CD4-positive, alpha-beta T cell (primary cell): ENCODE measurements at regions of chr7 and their contacts with region 1.

Region 1: GRCh38 chr7:156949541-156950380 is at the start of gene NOM1:
- DNase-seq: peak; percentile 85 to 96 (median 90)
- ATAC-seq: peak; percentile 94
- H3K4me3 ChIP-seq: peak within 1 kb of the TSS; percentile 89
- H3K4me3 Mint-ChIP-seq: peak within 1 kb of the TSS; percentile 97
- H3K27ac ChIP-seq: peak within 1 kb of the TSS in 1 of 2 donors; percentile 50
- H3K27ac Mint-ChIP-seq: peak within 1 kb of the TSS; percentile 82
- H3K4me1 ChIP-seq: peaks cover 30% of the 10 kb centered on the region
- H3K4me1 Mint-ChIP-seq: peaks cover 34% of the 10 kb centered on the region
- H3K27me3 ChIP-seq: peaks cover 0 to 4% of the 10 kb centered on the region in 2 experiments
- H3K27me3 Mint-ChIP-seq: peaks cover 8% of the 10 kb centered on the region
- CTCF ChIP-seq: peak; percentile 50
- total RNA-seq, gene NOM1: 25.5 to 27.6 TPM

Region 2: GRCh38 chr7:156927571-156928405 is 22.0 kb before region 1 on chr7:
- CTCF ChIA-PET with region 1: interaction called, 19 read pairs
- POLR2A ChIA-PET with region 1: no interaction called
- intact Hi-C with region 1: no loop called
- DNase-seq: no peak
- ATAC-seq: no peak
- H3K4me3 ChIP-seq: no peak overlapping the region
- H3K4me3 Mint-ChIP-seq: no peak overlapping the region
- H3K27ac ChIP-seq: no peak overlapping the region
- H3K27ac Mint-ChIP-seq: no peak overlapping the region
- H3K4me1 ChIP-seq: peaks cover 21% of the 10 kb centered on the region
- H3K4me1 Mint-ChIP-seq: peaks cover 23% of the 10 kb centered on the region
- H3K27me3 ChIP-seq: no peaks in the 10 kb centered on the region
- H3K27me3 Mint-ChIP-seq: no peaks in the 10 kb centered on the region
- CTCF ChIP-seq: no peak

Region 3: DNA sequence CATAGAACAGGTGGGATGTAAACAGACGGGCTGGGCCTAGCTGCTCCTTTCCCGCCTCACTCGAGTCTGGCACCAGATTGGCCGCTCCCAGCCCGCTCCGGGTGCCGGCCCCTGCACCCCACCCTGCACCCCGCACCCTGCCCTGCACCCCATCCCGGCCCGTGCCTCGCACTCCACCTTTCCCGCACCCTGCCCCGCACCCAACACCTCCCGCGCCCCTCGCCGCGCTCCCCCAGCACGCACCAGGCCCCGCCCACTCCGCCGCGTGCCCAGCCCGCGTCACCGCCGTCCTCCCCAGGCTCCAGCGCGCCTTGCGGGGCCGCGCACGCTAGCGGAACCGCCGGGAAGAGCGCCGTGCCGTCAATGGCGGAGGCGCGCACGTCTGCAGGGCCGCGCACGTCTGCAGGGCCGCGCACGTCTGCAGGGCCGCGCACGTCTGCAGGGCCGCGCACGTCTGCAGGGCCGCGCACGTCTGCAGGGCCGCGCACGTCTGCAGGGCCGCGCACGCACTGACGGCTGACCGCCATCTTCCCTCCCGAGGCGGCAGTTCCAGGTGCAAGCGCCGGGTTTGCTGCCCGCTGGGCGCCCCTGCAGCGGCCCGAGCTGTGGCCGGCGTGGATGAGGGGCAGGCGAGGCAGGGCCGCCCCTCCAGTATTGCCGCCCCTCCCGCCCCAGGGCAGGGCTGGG is 188.8 kb after region 1 on chr7 and contains the start of gene UBE3C:
- CTCF ChIA-PET with region 1: no interaction called
- POLR2A ChIA-PET with region 1: no interaction called
- intact Hi-C with region 1: loop called in 1 of 2 experiments (anchors 2 kb)
- DNase-seq: peak; percentile 79 to 97 (median 90)
- ATAC-seq: peak; percentile 81
- H3K4me3 ChIP-seq: peak within 1 kb of the TSS; percentile 78
- H3K4me3 Mint-ChIP-seq: peak within 1 kb of the TSS; percentile 92
- H3K27ac ChIP-seq: peak within 1 kb of the TSS; percentile 85 to 86
- H3K27ac Mint-ChIP-seq: peak within 1 kb of the TSS; percentile 98
- H3K4me1 ChIP-seq: peaks cover 44% of the 10 kb centered on the region
- H3K4me1 Mint-ChIP-seq: peaks cover 49% of the 10 kb centered on the region
- H3K27me3 ChIP-seq: no peaks in the 10 kb centered on the region
- H3K27me3 Mint-ChIP-seq: no peaks in the 10 kb centered on the region
- CTCF ChIP-seq: no peak
- total RNA-seq, gene UBE3C: 30.8 to 32.3 TPM

Region 4: GRCh38 chr7:157278791-157279724 is 329.3 kb after region 1 on chr7:
- CTCF ChIA-PET with region 1: no interaction called
- POLR2A ChIA-PET with region 1: no interaction called
- intact Hi-C with region 1: no loop called
- DNase-seq: peak in 3 of 14 experiments; percentile 5 to 35 (median 24)
- ATAC-seq: no peak
- H3K4me3 ChIP-seq: peak overlapping the region; percentile 35
- H3K4me3 Mint-ChIP-seq: no peak overlapping the region
- H3K27ac ChIP-seq: no peak overlapping the region
- H3K27ac Mint-ChIP-seq: no peak overlapping the region
- H3K4me1 ChIP-seq: peaks cover 41% of the 10 kb centered on the region
- H3K4me1 Mint-ChIP-seq: peaks cover 7% of the 10 kb centered on the region
- H3K27me3 ChIP-seq: peaks cover 16 to 28% of the 10 kb centered on the region in 2 experiments
- H3K27me3 Mint-ChIP-seq: peaks cover 5% of the 10 kb centered on the region
- CTCF ChIP-seq: no peak